HEK293 (cell line): ENCODE measurements at regions of chr1 and their contacts with region 1.

Region 1: GRCh38 chr1:224851210-224851847 is 78.1 kb upstream of the DNAH14 start:
- H3K4me3 ChIP-seq: no peak overlapping the region
- H3K27ac ChIP-seq: no peak overlapping the region
- H3K4me1 ChIP-seq: no peaks in the 10 kb centered on the region
- CTCF ChIP-seq: peak; percentile 83

Region 2: GRCh38 chr1:224644553-224645154 is 206.7 kb before region 1 on chr1:
- CTCF ChIA-PET with region 1: interaction called, 86 read pairs
- POLR2A ChIA-PET with region 1: no interaction called
- H3K4me3 ChIP-seq: no peak overlapping the region
- H3K27ac ChIP-seq: no peak overlapping the region
- H3K4me1 ChIP-seq: no peaks in the 10 kb centered on the region
- CTCF ChIP-seq: peak; percentile 83

Region 3: GRCh38 chr1:224711876-224712275 is 139.5 kb before region 1 on chr1:
- CTCF ChIA-PET with region 1: interaction called, 18 read pairs
- POLR2A ChIA-PET with region 1: no interaction called
- H3K4me3 ChIP-seq: no peak overlapping the region
- H3K27ac ChIP-seq: no peak overlapping the region
- H3K4me1 ChIP-seq: peaks cover 4% of the 10 kb centered on the region; the same call in 1 of the 2 replicates
- CTCF ChIP-seq: no peak

Region 4: GRCh38 chr1:224828691-224829090 is 22.6 kb before region 1 on chr1:
- CTCF ChIA-PET with region 1: interaction called, 25 read pairs
- POLR2A ChIA-PET with region 1: no interaction called
- H3K4me3 ChIP-seq: no peak overlapping the region
- H3K27ac ChIP-seq: no peak overlapping the region
- H3K4me1 ChIP-seq: no peaks in the 10 kb centered on the region
- CTCF ChIP-seq: no peak

Region 5: DNA sequence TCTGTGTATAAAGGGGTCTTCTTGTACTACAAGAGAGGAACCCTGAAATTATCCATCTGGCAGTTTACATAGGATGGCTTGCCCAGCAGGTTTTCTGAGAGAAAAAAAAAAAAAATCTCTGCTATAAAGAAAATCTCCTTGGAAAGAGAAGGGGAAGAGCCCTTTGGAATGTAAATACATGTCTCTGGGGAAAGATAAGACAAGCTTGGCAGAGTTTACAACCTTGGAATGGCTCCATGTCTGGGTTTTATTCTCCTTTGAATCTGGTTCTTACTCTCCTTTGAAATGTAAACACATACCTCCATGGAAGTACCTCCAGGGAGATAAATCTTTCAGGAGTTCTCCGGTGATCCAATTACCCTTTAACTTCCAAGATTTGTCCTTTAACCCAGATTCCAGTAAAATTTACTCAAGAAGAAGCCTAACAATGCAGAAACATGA is 33.1 kb after region 1 on chr1:
- CTCF ChIA-PET with region 1: interaction called, 32 read pairs
- POLR2A ChIA-PET with region 1: no interaction called
- H3K4me3 ChIP-seq: no peak overlapping the region
- H3K27ac ChIP-seq: peak overlapping the region; percentile 45
- H3K4me1 ChIP-seq: peaks cover 51% of the 10 kb centered on the region
- CTCF ChIP-seq: no peak

Region 6: GRCh38 chr1:224980181-224980580 is 128.9 kb after region 1 on chr1:
- CTCF ChIA-PET with region 1: no interaction called
- POLR2A ChIA-PET with region 1: no interaction called
- H3K4me3 ChIP-seq: no peak overlapping the region
- H3K27ac ChIP-seq: no peak overlapping the region
- H3K4me1 ChIP-seq: no peaks in the 10 kb centered on the region
- CTCF ChIP-seq: no peak